ENCODE measurements at regions of chr3 and their contacts with region 1.

Region 1: DNA sequence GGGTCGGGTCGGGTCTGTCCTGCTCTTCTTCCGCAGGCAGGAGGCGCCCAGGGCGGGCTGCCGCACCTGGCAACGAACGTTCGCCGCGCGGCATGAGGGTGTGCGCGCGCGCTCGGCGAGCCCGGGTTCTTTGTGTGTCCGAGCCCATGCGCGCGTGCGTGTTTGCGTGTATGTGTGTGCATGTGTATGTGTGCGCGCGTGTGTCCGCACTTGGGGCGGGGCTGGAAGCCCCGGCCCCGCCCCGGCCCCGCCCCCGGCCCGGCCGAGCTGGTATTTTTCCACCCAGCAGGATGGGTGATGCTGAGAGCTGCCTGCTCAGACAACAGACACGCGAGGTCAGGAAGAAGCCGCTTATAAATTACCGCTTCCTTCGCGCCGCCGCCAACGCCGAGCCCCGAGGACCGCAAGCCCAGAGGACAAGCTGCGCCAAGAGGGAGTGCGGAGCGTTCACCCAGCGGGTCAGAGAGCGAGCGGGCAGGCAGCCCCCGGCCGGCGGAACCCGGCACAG is at the start of gene SLC6A6:
- DNase-seq: peak; percentile 82 to 97
- H3K4me3 ChIP-seq: peak within 1 kb of the TSS; percentile 88
- H3K27ac ChIP-seq: peak within 1 kb of the TSS; percentile 99
- H3K4me1 ChIP-seq: peaks cover 39% of the 10 kb centered on the region
- H3K27me3 ChIP-seq: no peaks in the 10 kb centered on the region
- CTCF ChIP-seq: peak; percentile 57
- total RNA-seq, gene SLC6A6: 84.9 and 122 TPM in 2 replicates

Region 2: GRCh38 chr3:14225421-14225820 is 176.9 kb before region 1 on chr3:
- CTCF ChIA-PET with region 1: interaction called, 3 read pairs
- POLR2A ChIA-PET with region 1: interaction called, 3 read pairs
- intact Hi-C with region 1: loop called (anchors 1 kb)
- DNase-seq: peak in 1 of 2 experiments; percentile 80
- H3K4me3 ChIP-seq: peak overlapping the region; percentile 49; the same call in 1 of the 2 replicates
- H3K27ac ChIP-seq: peak overlapping the region; percentile 86
- H3K4me1 ChIP-seq: peaks cover 82% of the 10 kb centered on the region
- H3K27me3 ChIP-seq: no peaks in the 10 kb centered on the region
- CTCF ChIP-seq: no peak

Region 3: GRCh38 chr3:14371573-14372474 is 30.5 kb before region 1 on chr3:
- CTCF ChIA-PET with region 1: interaction called, 3 read pairs
- POLR2A ChIA-PET with region 1: no interaction called
- intact Hi-C with region 1: loop called (anchors 1 kb)
- DNase-seq: peak; percentile 90 to 93
- H3K4me3 ChIP-seq: no peak overlapping the region
- H3K27ac ChIP-seq: peak overlapping the region; percentile 62
- H3K4me1 ChIP-seq: peaks cover 54% of the 10 kb centered on the region
- H3K27me3 ChIP-seq: no peaks in the 10 kb centered on the region
- CTCF ChIP-seq: no peak; the same call in 1 of the 2 replicates

Region 4: DNA sequence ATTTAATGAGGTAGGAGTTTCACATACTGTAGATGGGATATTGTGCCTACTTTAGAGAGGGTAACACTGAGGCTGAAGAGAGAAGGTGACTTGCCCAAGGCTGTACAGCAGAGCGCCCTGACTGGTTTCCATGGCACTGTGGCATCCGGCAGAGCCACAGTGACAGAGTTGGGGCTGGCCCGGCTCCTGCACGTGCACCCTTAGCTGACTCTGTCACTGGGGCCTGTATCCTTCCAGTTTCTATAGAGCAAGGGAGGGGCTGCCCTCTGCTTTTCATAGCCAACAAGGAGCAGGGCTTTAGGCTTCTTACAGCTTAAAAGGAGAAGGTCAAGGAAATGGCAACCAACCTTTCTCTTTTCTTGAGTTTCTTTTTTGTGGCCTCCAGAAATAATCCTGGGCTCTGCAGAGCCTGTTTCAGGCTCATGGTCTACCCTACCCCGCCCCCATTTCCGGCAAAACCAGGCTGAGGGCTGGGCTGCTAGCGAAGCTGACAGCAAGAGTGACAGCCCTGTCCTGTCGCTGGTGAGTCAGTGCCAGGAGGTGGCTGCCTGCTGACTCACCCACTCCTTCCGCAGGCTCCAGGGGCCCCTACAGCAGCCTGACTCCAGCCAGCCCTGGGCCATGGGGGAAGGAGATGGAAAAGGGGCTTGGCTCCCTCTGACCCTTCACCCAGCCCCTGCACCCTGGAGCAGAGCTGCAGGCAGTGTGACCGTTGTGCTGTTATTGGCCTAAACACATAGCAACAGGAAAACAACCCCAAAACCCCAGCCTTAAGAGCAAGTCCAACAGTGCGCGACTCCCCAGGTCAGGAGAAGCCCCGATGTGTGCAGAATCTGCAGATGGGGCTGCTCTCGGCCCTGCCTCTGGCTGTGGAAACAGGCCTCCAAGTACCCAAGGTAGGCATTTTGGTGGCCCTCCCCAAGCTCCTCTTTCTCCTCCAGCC is 29.8 kb after region 1 on chr3:
- CTCF ChIA-PET with region 1: interaction called, 4 read pairs
- POLR2A ChIA-PET with region 1: no interaction called
- intact Hi-C with region 1: loop called (anchors 1 kb)
- DNase-seq: peak; percentile 92 to 94
- H3K4me3 ChIP-seq: no peak overlapping the region
- H3K27ac ChIP-seq: peak overlapping the region; percentile 77
- H3K4me1 ChIP-seq: peaks cover 88% of the 10 kb centered on the region
- H3K27me3 ChIP-seq: no peaks in the 10 kb centered on the region
- CTCF ChIP-seq: no peak

Region 5: GRCh38 chr3:14461748-14462324 is 59.5 kb after region 1 on chr3:
- CTCF ChIA-PET with region 1: interaction called, 5 read pairs
- POLR2A ChIA-PET with region 1: no interaction called
- intact Hi-C with region 1: loop called (anchors 2 kb)
- DNase-seq: peak in 1 of 2 experiments; percentile 34
- H3K4me3 ChIP-seq: no peak overlapping the region
- H3K27ac ChIP-seq: no peak overlapping the region
- H3K4me1 ChIP-seq: no peaks in the 10 kb centered on the region
- H3K27me3 ChIP-seq: no peaks in the 10 kb centered on the region
- CTCF ChIP-seq: peak; percentile 72